HEK293 (cell line): ENCODE measurements at regions of chr5 and their contacts with region 1.

Region 1: DNA sequence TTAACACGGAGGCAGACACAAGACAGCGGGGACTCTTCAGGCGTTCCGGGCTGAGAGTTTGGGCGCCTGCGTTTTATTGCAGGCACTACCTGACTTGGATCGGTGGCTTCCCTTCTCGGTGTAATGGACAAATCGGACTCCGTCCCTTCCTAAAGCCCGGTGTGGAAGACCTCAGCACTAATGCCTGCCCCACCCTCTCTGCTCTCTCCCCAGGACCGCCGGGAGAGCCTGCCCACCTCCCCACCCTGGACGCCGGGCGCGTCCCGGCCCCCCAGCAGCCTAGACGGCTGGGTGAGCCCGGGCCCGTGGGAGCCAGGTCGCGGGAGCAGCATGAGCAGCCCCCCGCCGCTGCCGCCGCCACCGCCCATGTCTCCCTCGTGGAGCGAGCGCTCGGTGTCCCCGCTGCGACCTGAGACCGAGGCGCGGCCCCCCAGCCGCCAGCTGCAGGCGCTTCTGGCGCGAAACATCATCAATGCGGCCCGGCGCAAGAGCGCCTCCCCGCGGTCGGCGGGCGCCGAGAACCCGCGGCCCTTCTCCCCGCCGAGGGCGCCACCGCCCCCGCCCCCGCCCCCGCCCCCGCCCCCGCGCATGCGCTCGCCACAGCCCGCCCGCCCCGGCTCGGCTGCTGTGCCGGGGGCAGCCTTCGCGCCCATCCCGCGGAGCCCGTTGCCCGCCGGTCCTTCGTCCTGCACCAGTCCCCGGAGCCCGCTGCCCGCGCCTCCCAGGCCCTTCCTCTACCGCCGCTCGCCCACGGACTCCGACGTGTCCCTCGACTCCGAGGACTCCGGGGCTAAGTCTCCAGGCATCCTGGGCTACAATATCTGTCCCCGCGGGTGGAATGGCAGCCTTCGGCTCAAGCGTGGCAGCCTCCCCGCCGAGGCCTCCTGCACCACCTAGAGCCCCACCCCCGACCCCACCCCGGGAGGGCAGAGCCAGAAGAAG is 4.6 kb upstream of the MYOZ3 start:
- H3K4me3 ChIP-seq: peak overlapping the region; percentile 55
- H3K27ac ChIP-seq: peak overlapping the region; percentile 73; the same call in 1 of the 2 replicates
- H3K4me1 ChIP-seq: no peaks in the 10 kb centered on the region
- CTCF ChIP-seq: peak; percentile 72

Region 2: DNA sequence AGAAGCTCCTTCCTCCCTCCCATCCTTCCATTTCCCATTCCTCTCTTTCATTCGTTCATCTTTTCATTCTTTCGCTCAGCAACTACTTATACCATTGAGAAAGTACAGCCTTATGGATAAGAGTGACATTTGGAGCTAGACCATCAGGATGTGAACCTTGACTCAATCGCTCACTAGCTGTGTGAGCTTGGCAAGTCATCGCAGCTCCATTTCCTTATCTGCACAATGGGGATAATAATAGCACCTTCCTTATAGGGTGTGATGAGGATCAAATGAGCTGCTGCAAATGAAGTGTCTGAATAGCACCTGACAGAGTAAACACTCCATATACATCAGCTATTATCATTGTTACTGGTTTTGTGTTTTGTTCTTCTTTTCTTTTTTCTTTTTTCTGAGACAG is 44.1 kb before region 1 on chr5:
- CTCF ChIA-PET with region 1: interaction called, 10 read pairs
- POLR2A ChIA-PET with region 1: no interaction called
- H3K4me3 ChIP-seq: no peak overlapping the region
- H3K27ac ChIP-seq: no peak overlapping the region
- H3K4me1 ChIP-seq: peaks cover 21% of the 10 kb centered on the region
- CTCF ChIP-seq: no peak

Region 3: GRCh38 chr5:150640311-150641005 is 16.0 kb before region 1 on chr5 and contains the start of gene SYNPO:
- CTCF ChIA-PET with region 1: interaction called, 46 read pairs
- POLR2A ChIA-PET with region 1: interaction called, 6 read pairs
- H3K4me3 ChIP-seq: no peak within 1 kb of the TSS
- H3K27ac ChIP-seq: no peak within 1 kb of the TSS
- H3K4me1 ChIP-seq: peaks cover 34% of the 10 kb centered on the region
- CTCF ChIP-seq: no peak